Colonic mucosa (tissue), 4 donors: ENCODE measurements at regions of chr22 and their contacts with region 1.

Region 1: DNA sequence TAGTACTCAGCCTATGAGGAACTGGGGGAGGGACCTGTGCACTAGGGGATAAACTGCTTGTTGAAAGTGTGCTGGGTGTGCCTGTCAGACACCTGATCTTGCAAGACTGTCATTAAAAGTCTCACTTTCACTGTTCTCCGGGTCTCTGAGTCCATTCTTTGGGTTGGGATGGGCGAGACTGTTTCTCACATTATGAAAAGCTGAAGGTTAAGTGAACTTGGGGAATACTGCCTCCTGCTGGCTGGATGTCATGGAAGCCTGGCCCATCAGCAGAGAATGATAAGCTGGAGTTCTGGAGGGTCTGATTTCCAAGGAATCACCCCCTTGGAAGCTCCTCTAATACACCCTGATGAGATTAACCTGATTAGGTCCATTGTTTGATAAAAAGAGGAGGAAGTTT is 9.0 kb upstream of the VPREB1 start:
- DNase-seq: peak; percentile 25
- H3K4me3 ChIP-seq: no peak overlapping the region
- H3K27ac ChIP-seq: no peak overlapping the region
- H3K4me1 ChIP-seq: no peaks in the 10 kb centered on the region
- H3K27me3 ChIP-seq: no peaks in the 10 kb centered on the region
- CTCF ChIP-seq: peak; percentile 35

Region 2: DNA sequence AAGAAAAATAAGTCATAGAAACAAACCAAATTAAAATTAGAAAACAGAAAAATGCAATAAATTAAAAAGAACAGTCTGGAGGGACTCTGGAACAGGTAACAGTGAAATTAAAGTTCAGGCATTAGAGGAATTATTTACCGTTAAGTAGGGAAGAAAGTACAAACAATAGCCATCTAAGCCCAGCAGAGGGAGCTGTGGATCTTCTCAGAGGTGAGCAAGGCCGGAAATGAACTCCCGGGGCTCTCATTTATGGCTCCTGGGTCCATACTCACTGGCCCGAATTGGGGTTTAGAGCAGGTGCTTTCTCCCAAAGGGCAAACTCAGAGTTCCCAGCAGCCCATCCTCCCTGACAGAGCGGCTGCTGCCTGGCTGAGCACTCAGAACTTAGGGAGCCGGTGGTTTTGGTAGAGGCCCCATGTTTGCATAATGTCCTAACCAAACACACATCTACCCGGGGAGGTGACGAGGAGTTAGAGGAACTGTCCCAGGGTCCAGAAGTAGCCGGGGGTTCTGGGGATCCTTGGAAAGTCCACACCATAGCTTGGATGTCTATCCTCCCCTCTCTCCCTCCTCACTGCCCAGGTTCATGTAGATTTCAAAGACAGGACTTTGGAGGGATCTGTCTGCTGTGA is 78.7 kb before region 1 on chr22:
- intact Hi-C with region 1: loop called (anchors 10 kb)
- DNase-seq: peak; percentile 65
- H3K4me3 ChIP-seq: no peak overlapping the region
- H3K27ac ChIP-seq: no peak overlapping the region
- H3K4me1 ChIP-seq: no peaks in the 10 kb centered on the region
- H3K27me3 ChIP-seq: no peaks in the 10 kb centered on the region
- CTCF ChIP-seq: peak; percentile 56

Region 3: GRCh38 chr22:22380098-22381030 is 144.8 kb after region 1 on chr22:
- intact Hi-C with region 1: no loop called
- DNase-seq: no peak
- H3K4me3 ChIP-seq: no peak overlapping the region
- H3K27ac ChIP-seq: no peak overlapping the region
- H3K4me1 ChIP-seq: no peaks in the 10 kb centered on the region
- H3K27me3 ChIP-seq: no peaks in the 10 kb centered on the region
- CTCF ChIP-seq: no peak